Left lung (tissue), 14 donors: ENCODE measurements at regions of chr20 and their contacts with region 1.

Region 1: GRCh38 chr20:5529331-5530148 is 212.8 kb upstream of the PROKR2 start:
- DNase-seq: peak; percentile 64 to 96 (median 78)
- ATAC-seq: peak; percentile 93
- H3K4me3 ChIP-seq: no peak overlapping the region
- H3K27ac ChIP-seq: no peak overlapping the region
- H3K4me1 ChIP-seq: peaks cover 6 to 51% of the 10 kb centered on the region in 2 donors
- H3K27me3 ChIP-seq: no peaks in the 10 kb centered on the region
- CTCF ChIP-seq: peak; percentile 62 to 72

Region 2: GRCh38 chr20:5463007-5463686 is 66.4 kb before region 1 on chr20:
- intact Hi-C with region 1: no loop called
- DNase-seq: no peak
- ATAC-seq: no peak
- H3K4me3 ChIP-seq: no peak overlapping the region
- H3K27ac ChIP-seq: no peak overlapping the region
- H3K4me1 ChIP-seq: no peaks in the 10 kb centered on the region
- H3K27me3 ChIP-seq: peaks cover 0 to 37% of the 10 kb centered on the region in 2 donors
- CTCF ChIP-seq: no peak

Region 3: GRCh38 chr20:5788385-5788895 is 258.9 kb after region 1 on chr20:
- intact Hi-C with region 1: loop called in 1 of 2 experiments (anchors 10 kb)
- DNase-seq: peak in 3 of 4 donors; percentile 72 to 88 (median 77)
- ATAC-seq: peak; percentile 95
- H3K4me3 ChIP-seq: no peak overlapping the region
- H3K27ac ChIP-seq: no peak overlapping the region
- H3K4me1 ChIP-seq: peaks cover 0 to 26% of the 10 kb centered on the region in 2 donors
- H3K27me3 ChIP-seq: no peaks in the 10 kb centered on the region
- CTCF ChIP-seq: peak; percentile 85

Region 4: DNA sequence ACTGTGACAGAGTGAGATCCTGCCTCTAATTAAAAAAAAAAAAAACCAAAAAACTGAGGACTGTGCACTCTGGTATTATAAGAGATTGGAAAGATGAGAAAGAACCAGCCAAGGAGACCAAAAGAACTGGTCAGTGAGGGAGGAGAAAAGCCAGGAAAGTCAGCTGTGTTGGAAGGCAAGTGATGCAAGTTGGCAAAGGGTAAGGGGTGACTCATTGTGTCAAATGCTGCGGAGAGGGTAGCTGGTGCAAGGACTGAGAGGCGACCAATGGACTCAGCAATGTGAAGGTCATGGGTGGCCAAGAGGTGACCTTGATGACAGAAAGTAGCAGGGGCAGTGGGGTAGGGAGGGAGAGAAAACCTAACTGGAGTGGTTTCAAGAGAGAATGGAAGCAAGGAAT is 551.7 kb after region 1 on chr20:
- intact Hi-C with region 1: loop called in 1 of 2 experiments (anchors 5 kb)
- DNase-seq: no peak
- ATAC-seq: no peak
- H3K4me3 ChIP-seq: no peak overlapping the region
- H3K27ac ChIP-seq: no peak overlapping the region
- H3K4me1 ChIP-seq: no peaks in the 10 kb centered on the region
- H3K27me3 ChIP-seq: no peaks in the 10 kb centered on the region
- CTCF ChIP-seq: no peak